GM23248 (cell line): ENCODE measurements at regions of chr12 and their contacts with region 1.

Region 1: GRCh38 chr12:31783996-31784645 is 55.3 kb upstream of the AMN1 start:
- DNase-seq: no peak
- H3K4me3 ChIP-seq: no peak overlapping the region
- H3K27ac ChIP-seq: no peak overlapping the region
- H3K4me1 ChIP-seq: no peaks in the 10 kb centered on the region
- H3K27me3 ChIP-seq: no peaks in the 10 kb centered on the region

Region 2: GRCh38 chr12:31682136-31682962 is 101.8 kb before region 1 on chr12:
- in situ Hi-C with region 1: loop called (anchors 25 kb)
- DNase-seq: peak; percentile 71
- H3K4me3 ChIP-seq: no peak overlapping the region
- H3K27ac ChIP-seq: no peak overlapping the region
- H3K4me1 ChIP-seq: no peaks in the 10 kb centered on the region
- H3K27me3 ChIP-seq: no peaks in the 10 kb centered on the region

Region 3: DNA sequence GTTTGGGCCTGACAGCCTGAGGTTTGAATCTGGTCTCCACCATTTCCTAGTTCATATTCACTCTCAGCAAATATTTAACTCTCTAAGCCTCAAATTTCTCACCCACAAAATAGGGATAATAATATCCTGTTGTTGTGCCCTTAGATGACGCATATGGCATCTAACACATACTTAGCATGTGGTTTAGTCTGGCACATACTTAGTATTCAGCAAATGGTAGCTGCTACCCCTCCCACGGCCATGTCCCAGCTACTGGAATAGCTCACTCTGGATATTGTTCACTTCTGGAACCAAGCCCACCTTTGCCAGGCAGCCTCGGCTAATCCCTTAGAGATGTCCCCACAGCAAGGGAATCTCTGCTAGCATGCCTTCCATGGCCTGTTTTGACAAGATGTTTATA is 375.8 kb after region 1 on chr12:
- in situ Hi-C with region 1: no loop called
- DNase-seq: peak; percentile 8
- H3K4me3 ChIP-seq: no peak overlapping the region
- H3K27ac ChIP-seq: no peak overlapping the region
- H3K4me1 ChIP-seq: no peaks in the 10 kb centered on the region
- H3K27me3 ChIP-seq: no peaks in the 10 kb centered on the region